ENCODE measurements at regions of chr3 and their contacts with region 1.

Region 1: GRCh38 chr3:42600111-42600988 is at the start of gene NKTR:
- H3K4me3 ChIP-seq: peak within 1 kb of the TSS; percentile 93
- H3K27ac ChIP-seq: peak within 1 kb of the TSS; percentile 75
- H3K4me1 ChIP-seq: no peaks in the 10 kb centered on the region
- CTCF ChIP-seq: peak; percentile 59

Region 2: GRCh38 chr3:42314411-42314810 is 285.9 kb before region 1 on chr3:
- CTCF ChIA-PET with region 1: no interaction called
- POLR2A ChIA-PET with region 1: no interaction called
- H3K4me3 ChIP-seq: no peak overlapping the region
- H3K27ac ChIP-seq: no peak overlapping the region
- H3K4me1 ChIP-seq: no peaks in the 10 kb centered on the region
- CTCF ChIP-seq: no peak

Region 3: DNA sequence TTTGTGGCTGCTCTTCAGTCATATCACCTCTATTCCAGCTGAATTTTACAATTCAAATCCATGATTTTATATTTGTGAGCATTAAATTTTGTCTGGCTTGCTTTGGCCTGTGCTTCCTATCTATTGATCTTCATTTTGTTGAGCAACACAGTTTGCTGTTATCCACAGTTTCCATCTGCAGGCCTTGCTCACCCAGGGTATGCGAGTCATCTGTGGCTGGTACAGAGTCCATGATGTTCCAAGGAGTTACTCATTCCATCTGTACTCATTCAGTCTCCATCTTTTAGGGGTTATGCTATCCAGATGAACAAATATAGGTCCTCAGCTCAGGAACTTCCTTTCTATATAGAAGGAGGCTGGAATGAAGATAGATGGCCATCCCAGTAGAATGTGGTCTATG is 264.2 kb before region 1 on chr3:
- CTCF ChIA-PET with region 1: no interaction called
- POLR2A ChIA-PET with region 1: no interaction called
- H3K4me3 ChIP-seq: no peak overlapping the region
- H3K27ac ChIP-seq: no peak overlapping the region
- H3K4me1 ChIP-seq: no peaks in the 10 kb centered on the region
- CTCF ChIP-seq: no peak

Region 4: GRCh38 chr3:42461762-42462161 is 138.6 kb before region 1 on chr3:
- CTCF ChIA-PET with region 1: no interaction called
- POLR2A ChIA-PET with region 1: no interaction called
- H3K4me3 ChIP-seq: no peak overlapping the region
- H3K27ac ChIP-seq: no peak overlapping the region
- H3K4me1 ChIP-seq: no peaks in the 10 kb centered on the region
- CTCF ChIP-seq: no peak

Region 5: DNA sequence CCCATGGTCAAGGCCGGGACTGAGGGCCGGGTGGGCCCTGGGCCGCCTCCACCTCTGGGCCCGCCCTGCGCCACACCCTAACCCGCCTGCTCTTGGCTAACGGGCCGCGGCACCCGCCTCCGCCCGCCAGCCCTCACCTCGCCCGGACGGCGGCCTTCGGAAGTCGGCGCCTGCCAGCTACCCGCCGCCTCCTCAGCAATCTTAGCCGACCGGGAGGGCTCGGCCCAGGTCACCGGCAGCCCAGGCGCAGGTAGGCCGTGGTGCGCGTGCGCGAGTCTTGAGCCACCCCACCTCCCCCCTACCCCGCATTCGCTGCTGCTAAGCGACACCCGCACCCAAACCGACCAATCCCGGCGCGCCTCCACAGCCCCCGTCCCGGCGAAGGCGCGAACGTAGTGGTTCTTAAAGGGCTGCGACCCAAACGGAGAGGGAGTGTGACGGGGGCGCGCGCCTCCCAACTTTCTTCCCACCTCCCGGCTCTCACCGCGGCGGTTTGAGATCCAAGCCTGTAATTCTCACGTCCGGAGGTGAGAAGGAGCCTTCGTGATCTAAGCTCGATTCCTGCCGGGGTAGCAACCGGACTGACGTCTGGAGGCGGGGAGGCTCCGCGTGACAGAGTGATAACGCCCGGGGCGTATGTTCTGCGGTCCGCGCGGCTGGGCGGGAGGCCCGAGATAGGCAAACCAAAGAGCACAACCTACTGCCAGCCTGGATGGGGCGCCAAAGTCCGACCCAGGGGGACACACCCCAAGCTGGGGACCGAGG is 18.5 kb before region 1 on chr3 and contains the start of gene SEC22C:
- CTCF ChIA-PET with region 1: interaction called, 8 read pairs
- POLR2A ChIA-PET with region 1: interaction called, 23 read pairs
- H3K4me3 ChIP-seq: peak within 1 kb of the TSS; percentile 86
- H3K27ac ChIP-seq: peak within 1 kb of the TSS; percentile 62
- H3K4me1 ChIP-seq: 0 out of 2 replicates have a peak, but pooled peaks cover 2% of the 10 kb centered on the region
- CTCF ChIP-seq: peak; percentile 51; the same call in 1 of the 2 replicates

Measured in HEK293 (cell line).